T-cell (primary cell): ENCODE measurements at regions of chr19 and their contacts with region 1.

Region 1: GRCh38 chr19:49497047-49497788 is 984 bp downstream of the RPS11 start:
- DNase-seq: peak; percentile 57 to 87 (median 76)
- ATAC-seq: peak in 2 of 4 experiments; percentile 3 to 12
- H3K4me3 ChIP-seq: peak overlapping the region; percentile 78 to 92
- H3K4me3 Mint-ChIP-seq: peak overlapping the region; percentile 99 to 100 (median 100)
- H3K27ac ChIP-seq: peak overlapping the region; percentile 92
- H3K27ac Mint-ChIP-seq: peak overlapping the region; percentile 95 to 100
- H3K4me1 ChIP-seq: peaks cover 14 to 67% of the 10 kb centered on the region in 2 experiments
- H3K4me1 Mint-ChIP-seq: peaks cover 58 to 66% (median 66%) of the 10 kb centered on the region in 3 donors
- H3K27me3 ChIP-seq: no peaks in the 10 kb centered on the region
- H3K27me3 Mint-ChIP-seq: no peaks in the 10 kb centered on the region

Region 2: GRCh38 chr19:49106648-49107135 is 390.5 kb before region 1 on chr19:
- CTCF ChIA-PET with region 1: no interaction called
- POLR2A ChIA-PET with region 1: no interaction called
- DNase-seq: peak; percentile 32 to 81 (median 57)
- ATAC-seq: peak; percentile 75 to 76 (median 75)
- H3K4me3 ChIP-seq: no peak overlapping the region
- H3K4me3 Mint-ChIP-seq: no peak overlapping the region
- H3K27ac ChIP-seq: no peak overlapping the region
- H3K27ac Mint-ChIP-seq: peak overlapping the region in 1 of 2 donors; percentile 40
- H3K4me1 ChIP-seq: no peaks in the 10 kb centered on the region
- H3K4me1 Mint-ChIP-seq: peaks cover 5 to 9% (median 6%) of the 10 kb centered on the region in 3 donors
- H3K27me3 ChIP-seq: peaks cover 0 to 3% of the 10 kb centered on the region in 2 experiments
- H3K27me3 Mint-ChIP-seq: no peaks in the 10 kb centered on the region

Region 3: DNA sequence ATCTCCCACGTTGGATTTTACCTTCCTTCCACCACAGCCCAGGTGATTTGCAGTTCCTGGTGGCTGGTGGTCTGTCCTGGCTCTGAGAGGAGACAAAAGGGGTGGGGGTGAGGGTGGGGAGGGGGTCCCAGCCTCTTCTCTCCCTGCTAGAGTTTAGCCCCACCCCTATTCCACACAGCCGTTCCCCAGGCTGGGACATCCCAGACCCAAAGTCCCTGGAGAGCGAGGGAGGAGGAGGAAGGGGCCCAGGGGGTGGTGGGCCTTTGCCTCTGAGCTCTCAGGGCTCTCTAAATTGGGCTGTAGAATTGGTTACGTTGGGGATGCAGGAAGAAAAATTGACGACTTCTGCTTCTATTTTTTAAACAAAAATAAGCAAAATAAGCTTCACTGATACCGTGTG is 254.1 kb before region 1 on chr19:
- CTCF ChIA-PET with region 1: no interaction called
- POLR2A ChIA-PET with region 1: no interaction called
- DNase-seq: no peak
- ATAC-seq: no peak
- H3K4me3 ChIP-seq: no peak overlapping the region
- H3K4me3 Mint-ChIP-seq: no peak overlapping the region
- H3K27ac ChIP-seq: no peak overlapping the region
- H3K27ac Mint-ChIP-seq: no peak overlapping the region
- H3K4me1 ChIP-seq: no peaks in the 10 kb centered on the region
- H3K4me1 Mint-ChIP-seq: no peaks in the 10 kb centered on the region
- H3K27me3 ChIP-seq: peaks cover 0 to 8% of the 10 kb centered on the region in 2 experiments
- H3K27me3 Mint-ChIP-seq: peaks cover 3 to 9% of the 10 kb centered on the region in 2 donors

Region 4: DNA sequence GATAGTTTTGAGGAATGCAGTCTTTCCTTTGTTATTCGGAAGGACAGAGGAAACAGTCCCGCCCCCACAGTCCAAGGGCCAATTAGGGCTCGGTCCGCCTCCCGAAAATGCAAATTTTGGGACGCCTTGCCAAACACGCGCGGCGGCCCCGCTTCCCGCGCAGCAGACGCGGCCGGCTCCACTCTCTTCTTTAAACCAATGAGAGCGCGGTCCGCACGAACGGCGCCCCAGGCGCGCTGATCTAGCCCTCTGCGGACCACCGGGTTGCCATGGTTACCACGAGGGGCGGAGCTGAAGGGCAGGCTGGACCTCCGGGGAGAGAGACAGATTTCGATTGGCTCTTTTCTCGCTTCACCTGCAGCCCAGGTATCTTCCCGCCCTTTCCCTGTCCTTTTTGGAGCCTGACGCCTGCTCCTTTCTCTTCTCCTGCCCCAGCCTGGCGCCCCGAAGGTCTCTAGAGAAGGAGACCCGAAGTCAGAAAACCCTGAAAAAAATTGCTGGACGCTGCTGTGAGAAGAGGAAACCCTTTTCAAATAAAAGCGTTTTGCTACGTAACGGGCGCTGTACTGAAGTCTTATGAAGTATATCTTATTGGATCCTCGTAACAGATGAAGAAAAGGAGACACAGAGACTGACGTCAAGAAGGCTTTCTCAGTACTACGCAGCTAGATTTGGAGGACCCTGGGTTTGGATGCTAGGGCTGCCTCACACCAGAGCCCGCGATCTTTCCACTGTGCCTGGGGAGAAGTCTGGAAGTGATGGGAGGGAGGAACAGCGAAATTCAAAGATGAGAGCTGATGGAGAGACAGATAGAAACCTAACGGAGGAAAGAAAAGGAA is 76.0 kb before region 1 on chr19:
- CTCF ChIA-PET with region 1: no interaction called
- POLR2A ChIA-PET with region 1: no interaction called
- DNase-seq: peak in 5 of 35 experiments; percentile 20 to 54 (median 32)
- ATAC-seq: peak in 2 of 4 experiments; percentile 39 to 64
- H3K4me3 ChIP-seq: peak overlapping the region in 1 of 2 donors; percentile 39
- H3K4me3 Mint-ChIP-seq: peak overlapping the region; percentile 31 to 82 (median 35)
- H3K27ac ChIP-seq: no peak overlapping the region
- H3K27ac Mint-ChIP-seq: no peak overlapping the region
- H3K4me1 ChIP-seq: peaks cover 13 to 42% of the 10 kb centered on the region in 2 experiments
- H3K4me1 Mint-ChIP-seq: peaks cover 43 to 57% (median 53%) of the 10 kb centered on the region in 3 donors
- H3K27me3 ChIP-seq: peaks cover 12 to 94% of the 10 kb centered on the region in 2 experiments
- H3K27me3 Mint-ChIP-seq: peaks cover 75 to 83% of the 10 kb centered on the region in 2 donors

Region 5: DNA sequence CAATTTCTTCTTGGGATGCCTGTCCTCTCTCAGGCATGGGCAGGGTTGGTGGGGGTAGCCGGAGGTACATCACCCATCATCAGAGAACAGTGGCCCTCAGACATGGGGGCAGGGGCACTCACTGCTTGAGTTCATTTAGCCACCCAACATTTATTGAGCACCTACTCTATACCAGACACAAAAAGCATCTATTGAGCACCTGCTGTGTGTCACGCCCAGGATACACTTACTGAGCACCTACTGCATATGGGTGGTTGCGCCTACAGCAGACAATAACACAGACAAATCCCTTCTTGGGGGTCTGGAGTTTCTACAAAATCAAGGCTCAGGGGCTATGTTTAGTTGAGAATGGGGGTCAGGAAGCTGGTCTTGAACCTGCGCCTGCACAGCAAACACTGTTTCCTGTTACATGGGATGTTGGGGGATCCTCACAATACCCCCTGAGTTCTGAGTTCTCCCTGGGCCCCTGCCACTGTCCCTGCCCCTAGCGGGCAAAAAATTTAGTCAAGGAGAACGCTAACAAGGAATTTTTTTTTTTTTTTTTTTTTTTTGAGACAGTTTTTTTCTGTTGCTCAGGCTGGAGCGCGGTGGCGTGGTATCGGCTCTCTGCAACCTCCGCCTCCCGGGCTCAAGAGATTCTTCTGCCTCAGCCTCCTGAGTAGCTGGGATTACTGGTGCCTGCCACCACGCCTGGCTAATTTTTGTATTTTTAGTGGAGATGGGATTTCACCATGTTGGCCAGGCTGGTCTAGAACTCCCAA is 42.2 kb after region 1 on chr19:
- CTCF ChIA-PET with region 1: no interaction called
- POLR2A ChIA-PET with region 1: no interaction called
- DNase-seq: no peak
- ATAC-seq: no peak
- H3K4me3 ChIP-seq: no peak overlapping the region
- H3K4me3 Mint-ChIP-seq: no peak overlapping the region
- H3K27ac ChIP-seq: no peak overlapping the region
- H3K27ac Mint-ChIP-seq: no peak overlapping the region
- H3K4me1 ChIP-seq: peaks cover 13 to 20% of the 10 kb centered on the region in 2 experiments
- H3K4me1 Mint-ChIP-seq: peaks cover 16 to 21% (median 18%) of the 10 kb centered on the region in 3 donors
- H3K27me3 ChIP-seq: no peaks in the 10 kb centered on the region
- H3K27me3 Mint-ChIP-seq: no peaks in the 10 kb centered on the region

Region 6: DNA sequence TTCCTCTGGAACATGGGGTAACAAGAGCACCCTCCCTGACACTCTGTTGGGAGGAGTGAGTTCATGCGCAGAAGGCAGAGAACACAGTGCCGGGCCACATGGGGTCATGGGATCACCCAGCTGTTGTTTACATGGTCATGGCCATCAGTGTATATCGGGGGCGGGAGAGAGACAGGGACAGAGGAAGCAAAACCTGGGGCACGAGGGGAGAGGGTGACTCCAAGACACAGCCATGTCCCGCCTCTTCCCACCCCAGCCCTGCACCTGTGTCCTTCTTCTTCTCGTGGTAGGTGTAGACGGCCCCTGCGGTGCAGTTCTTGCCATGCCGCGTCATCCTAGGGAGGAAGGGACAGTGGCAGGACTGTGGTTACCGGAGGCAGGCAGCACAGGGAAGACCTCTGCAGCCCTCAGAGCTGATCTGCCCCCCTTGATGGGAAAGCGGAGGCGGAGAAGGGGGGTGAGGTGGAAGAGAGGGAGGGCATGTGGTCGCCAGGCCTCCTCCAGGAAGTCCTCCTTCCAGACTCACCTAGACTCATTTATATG is 63.2 kb after region 1 on chr19:
- CTCF ChIA-PET with region 1: interaction called in 1 of 2 experiments, 11 read pairs
- POLR2A ChIA-PET with region 1: no interaction called
- DNase-seq: peak in 13 of 35 experiments; percentile 24 to 61 (median 39)
- ATAC-seq: peak in 3 of 4 experiments; percentile 7 to 23 (median 16)
- H3K4me3 ChIP-seq: peak overlapping the region; percentile 65 to 81
- H3K4me3 Mint-ChIP-seq: peak overlapping the region; percentile 86 to 96 (median 86)
- H3K27ac ChIP-seq: peak overlapping the region; percentile 79
- H3K27ac Mint-ChIP-seq: peak overlapping the region; percentile 94 to 99
- H3K4me1 ChIP-seq: peaks cover 60 to 97% of the 10 kb centered on the region in 2 experiments
- H3K4me1 Mint-ChIP-seq: peaks cover 78 to 89% (median 82%) of the 10 kb centered on the region in 3 donors
- H3K27me3 ChIP-seq: no peaks in the 10 kb centered on the region
- H3K27me3 Mint-ChIP-seq: no peaks in the 10 kb centered on the region